H1 (cell line): ENCODE measurements at regions of chr11 and their contacts with region 1.

Region 1: GRCh38 chr11:4181782-4182721 is 87.5 kb downstream of the RRM1 start:
- DNase-seq: peak; percentile 51 to 75
- H3K4me3 ChIP-seq: no peak overlapping the region
- H3K27ac ChIP-seq: no peak overlapping the region
- H3K4me1 ChIP-seq: no peaks in the 10 kb centered on the region
- H3K27me3 ChIP-seq: no peaks in the 10 kb centered on the region
- CTCF ChIP-seq: peak; percentile 78 to 88 (median 86)
- EP300 ChIP-seq: no peak
- POLR2A ChIP-seq: no peak
- RAD21 ChIP-seq: peak; percentile 91 to 94

Region 2: GRCh38 chr11:3971756-3972404 is 210.2 kb before region 1 on chr11:
- CTCF ChIA-PET with region 1: no interaction called
- POLR2A ChIA-PET with region 1: no interaction called
- DNase-seq: no peak
- H3K4me3 ChIP-seq: no peak overlapping the region
- H3K27ac ChIP-seq: no peak overlapping the region
- H3K4me1 ChIP-seq: no peaks in the 10 kb centered on the region
- H3K27me3 ChIP-seq: no peaks in the 10 kb centered on the region
- CTCF ChIP-seq: no peak
- EP300 ChIP-seq: no peak
- POLR2A ChIP-seq: no peak
- RAD21 ChIP-seq: no peak

Region 3: DNA sequence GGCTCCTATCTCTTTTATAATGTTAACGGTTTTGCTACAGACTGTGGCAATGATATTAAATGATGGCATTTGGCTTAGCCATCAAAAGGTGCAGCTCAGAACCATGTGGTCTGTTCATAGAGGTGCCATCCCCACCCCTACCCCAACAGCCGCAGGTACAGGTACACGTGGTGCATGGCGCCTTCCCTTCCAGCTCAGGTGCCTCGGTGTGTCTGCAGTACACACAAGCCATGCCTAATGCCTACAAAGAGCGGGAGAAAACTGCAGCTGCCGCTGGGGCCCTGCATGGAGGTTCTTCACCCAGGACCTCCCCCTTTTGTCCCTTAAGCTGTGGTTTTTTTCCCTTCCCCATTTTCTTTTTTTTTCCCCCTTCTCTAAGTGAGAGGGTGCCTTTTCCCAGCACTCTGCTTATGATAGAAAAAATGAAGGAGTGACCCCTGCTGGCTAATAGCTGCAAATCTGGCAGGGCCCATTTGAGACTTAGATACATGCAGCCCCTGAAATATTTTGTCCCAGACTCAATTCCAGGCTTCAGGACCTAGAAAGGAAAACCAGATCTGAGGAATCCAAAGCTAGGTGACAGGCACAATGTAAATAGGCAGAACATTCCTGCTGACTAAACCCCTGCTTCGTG is 369.4 kb after region 1 on chr11:
- CTCF ChIA-PET with region 1: interaction called, 22 read pairs
- POLR2A ChIA-PET with region 1: no interaction called
- DNase-seq: no peak
- H3K4me3 ChIP-seq: no peak overlapping the region
- H3K27ac ChIP-seq: no peak overlapping the region
- H3K4me1 ChIP-seq: no peaks in the 10 kb centered on the region
- H3K27me3 ChIP-seq: no peaks in the 10 kb centered on the region
- CTCF ChIP-seq: peak in 2 of 3 experiments; percentile 34 to 51; a peak in 3 of 4 replicates
- EP300 ChIP-seq: no peak
- POLR2A ChIP-seq: no peak
- RAD21 ChIP-seq: peak; percentile 33 to 44